ENCODE measurements at regions of chr5 and their contacts with region 1.

Region 1: DNA sequence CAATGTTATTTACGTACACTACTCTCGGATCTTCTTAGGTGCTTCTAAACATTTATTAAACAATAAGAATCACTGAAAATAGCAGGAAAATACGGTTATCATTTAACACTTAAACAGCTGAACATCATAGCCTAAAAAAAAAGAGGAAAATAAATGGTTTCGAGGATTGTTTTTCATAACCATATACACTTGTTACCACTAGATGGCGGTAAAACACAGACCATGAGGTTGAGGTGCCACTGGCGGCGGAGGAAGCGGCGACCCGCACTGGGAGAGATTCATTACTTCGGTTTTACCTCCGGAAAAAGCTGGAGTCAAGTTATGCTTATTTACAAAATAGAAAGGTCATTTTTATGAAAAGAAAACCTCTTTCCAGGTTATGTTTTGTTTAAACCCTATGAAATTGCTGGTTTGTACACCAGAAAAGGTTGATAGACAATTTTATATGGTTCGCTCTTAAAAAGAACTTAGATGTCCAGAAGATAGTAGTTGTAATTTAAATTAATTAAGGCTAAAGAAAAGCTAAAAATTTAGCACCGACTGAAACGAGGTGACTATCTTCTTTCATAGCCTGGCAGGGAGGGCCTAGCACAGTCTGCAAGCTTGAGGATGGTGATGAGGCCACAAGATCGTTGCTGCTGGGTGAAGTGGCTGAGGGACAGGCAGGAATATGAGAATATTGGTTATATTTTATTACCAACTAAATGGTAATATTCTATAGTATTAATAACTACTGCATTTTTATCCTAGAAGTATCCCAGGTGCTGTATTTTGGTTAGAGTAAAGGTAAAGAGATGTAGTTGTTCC is 605.7 kb downstream of the RAB3C start:
- DNase-seq: peak; percentile 16 to 76 (median 66)
- ATAC-seq: peak; percentile 92
- H3K4me3 ChIP-seq: no peak overlapping the region
- H3K4me3 Mint-ChIP-seq: peak overlapping the region in 6 of 10 donors; percentile 0 to 61 (median 38)
- H3K27ac ChIP-seq: no peak overlapping the region
- H3K27ac Mint-ChIP-seq: no peak overlapping the region
- H3K4me1 ChIP-seq: peaks cover 0 to 4% of the 10 kb centered on the region in 2 donors
- H3K4me1 Mint-ChIP-seq: peaks cover 4 to 7% (median 5%) of the 10 kb centered on the region in 7 donors
- H3K27me3 ChIP-seq: no peaks in the 10 kb centered on the region
- H3K27me3 Mint-ChIP-seq: peaks cover 6 to 49% (median 7%) of the 10 kb centered on the region in 5 donors

Region 2: GRCh38 chr5:59367791-59368394 is 179.3 kb after region 1 on chr5:
- CTCF ChIA-PET with region 1: interaction called, 29 read pairs
- POLR2A ChIA-PET with region 1: no interaction called
- intact Hi-C with region 1: loop called (anchors 1 kb)
- DNase-seq: peak in 8 of 9 donors; percentile 1 to 47 (median 30)
- ATAC-seq: peak; percentile 60
- H3K4me3 ChIP-seq: no peak overlapping the region
- H3K4me3 Mint-ChIP-seq: peak overlapping the region in 1 of 10 donors; percentile 24
- H3K27ac ChIP-seq: no peak overlapping the region
- H3K27ac Mint-ChIP-seq: no peak overlapping the region
- H3K4me1 ChIP-seq: no peaks in the 10 kb centered on the region
- H3K4me1 Mint-ChIP-seq: peaks cover 0 to 5% (median 0%) of the 10 kb centered on the region in 7 donors
- H3K27me3 ChIP-seq: no peaks in the 10 kb centered on the region
- H3K27me3 Mint-ChIP-seq: peaks cover 0 to 32% (median 4%) of the 10 kb centered on the region in 5 donors

Region 3: DNA sequence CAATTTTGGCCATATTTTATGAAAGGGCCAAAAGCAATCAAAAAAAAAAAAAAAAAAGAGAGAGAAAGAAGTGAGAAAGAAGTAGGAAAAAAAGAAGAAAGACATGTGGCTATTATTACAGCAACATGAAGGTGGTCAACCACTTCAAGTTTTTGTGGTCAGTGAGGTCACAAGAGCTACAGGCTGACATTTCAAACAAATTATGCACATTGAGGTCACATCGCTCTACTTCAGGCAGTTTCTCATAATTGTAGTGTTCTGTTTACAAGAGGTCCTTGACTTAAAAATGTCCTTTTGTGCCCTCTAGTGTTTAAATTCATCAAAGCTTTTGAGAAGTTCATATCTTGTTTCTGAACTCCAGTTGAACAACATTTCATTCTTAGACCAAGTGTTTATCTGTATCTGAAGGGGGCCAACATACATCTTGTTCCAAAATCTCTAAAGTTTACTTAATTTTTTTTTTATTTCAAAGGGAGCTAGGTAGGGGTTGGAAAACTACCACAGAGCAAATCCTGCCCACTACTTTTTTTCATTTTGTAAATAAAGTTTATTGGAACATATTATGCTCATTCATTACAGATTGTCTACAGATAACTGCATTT is 191.8 kb after region 1 on chr5:
- CTCF ChIA-PET with region 1: interaction called, 26 read pairs
- POLR2A ChIA-PET with region 1: no interaction called
- intact Hi-C with region 1: loop called (anchors 1 kb)
- DNase-seq: peak in 6 of 9 donors; percentile 2 to 50 (median 36)
- ATAC-seq: peak; percentile 85
- H3K4me3 ChIP-seq: no peak overlapping the region
- H3K4me3 Mint-ChIP-seq: peak overlapping the region in 1 of 10 donors; percentile 35
- H3K27ac ChIP-seq: no peak overlapping the region
- H3K27ac Mint-ChIP-seq: no peak overlapping the region
- H3K4me1 ChIP-seq: no peaks in the 10 kb centered on the region
- H3K4me1 Mint-ChIP-seq: no peaks in the 10 kb centered on the region
- H3K27me3 ChIP-seq: no peaks in the 10 kb centered on the region
- H3K27me3 Mint-ChIP-seq: peaks cover 0 to 19% (median 0%) of the 10 kb centered on the region in 5 donors

Region 4: GRCh38 chr5:59673438-59674058 is 484.9 kb after region 1 on chr5:
- CTCF ChIA-PET with region 1: no interaction called
- POLR2A ChIA-PET with region 1: no interaction called
- intact Hi-C with region 1: loop called in 1 of 2 experiments (anchors 1 kb)
- DNase-seq: peak in 5 of 9 donors; percentile 17 to 43 (median 27)
- ATAC-seq: peak; percentile 45
- H3K4me3 ChIP-seq: no peak overlapping the region
- H3K4me3 Mint-ChIP-seq: no peak overlapping the region
- H3K27ac ChIP-seq: no peak overlapping the region
- H3K27ac Mint-ChIP-seq: no peak overlapping the region
- H3K4me1 ChIP-seq: no peaks in the 10 kb centered on the region
- H3K4me1 Mint-ChIP-seq: peaks cover 0 to 5% (median 0%) of the 10 kb centered on the region in 7 donors
- H3K27me3 ChIP-seq: no peaks in the 10 kb centered on the region
- H3K27me3 Mint-ChIP-seq: peaks cover under 1 to 20% (median 6%) of the 10 kb centered on the region in 5 donors